BJ (cell line): ENCODE measurements at regions of chr20 and their contacts with region 1.

Region 1: DNA sequence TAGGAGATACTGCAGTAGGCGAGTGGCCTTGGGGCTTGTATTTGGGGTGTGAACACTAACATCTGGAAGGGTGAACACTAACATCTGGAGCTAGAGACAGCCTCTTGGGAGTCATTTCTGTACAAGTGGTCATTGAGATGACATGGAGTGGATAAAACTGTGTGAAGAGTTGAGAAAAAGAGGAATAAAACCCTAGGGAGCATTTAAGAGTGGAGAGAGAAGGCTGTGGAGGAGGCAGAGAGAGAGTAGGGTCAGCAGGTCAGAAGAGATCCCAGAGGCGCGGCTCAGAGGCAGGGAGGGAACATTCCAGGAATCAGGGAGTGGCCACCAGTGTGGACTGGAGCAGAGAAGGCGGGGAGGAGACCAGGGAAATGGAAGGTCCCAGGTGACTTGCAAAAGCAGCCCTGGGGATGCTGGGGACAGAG is 202.0 kb upstream of the RNF24 start:
- DNase-seq: no peak
- H3K4me3 ChIP-seq: no peak overlapping the region
- H3K27me3 ChIP-seq: no peaks in the 10 kb centered on the region
- CTCF ChIP-seq: no peak

Region 2: GRCh38 chr20:4064144-4064909 is 153.0 kb before region 1 on chr20:
- CTCF ChIA-PET with region 1: no interaction called
- POLR2A ChIA-PET with region 1: no interaction called
- DNase-seq: peak; percentile 78
- H3K4me3 ChIP-seq: no peak overlapping the region
- H3K27me3 ChIP-seq: no peaks in the 10 kb centered on the region
- CTCF ChIP-seq: 0 out of 2 replicates have a peak, but pooled peaks have one; percentile 2

Region 3: GRCh38 chr20:4112481-4113421 is 104.6 kb before region 1 on chr20:
- CTCF ChIA-PET with region 1: interaction called, 3 read pairs
- POLR2A ChIA-PET with region 1: interaction called, 15 read pairs
- DNase-seq: no peak
- H3K4me3 ChIP-seq: no peak overlapping the region
- H3K27me3 ChIP-seq: no peaks in the 10 kb centered on the region
- CTCF ChIP-seq: no peak

Region 4: DNA sequence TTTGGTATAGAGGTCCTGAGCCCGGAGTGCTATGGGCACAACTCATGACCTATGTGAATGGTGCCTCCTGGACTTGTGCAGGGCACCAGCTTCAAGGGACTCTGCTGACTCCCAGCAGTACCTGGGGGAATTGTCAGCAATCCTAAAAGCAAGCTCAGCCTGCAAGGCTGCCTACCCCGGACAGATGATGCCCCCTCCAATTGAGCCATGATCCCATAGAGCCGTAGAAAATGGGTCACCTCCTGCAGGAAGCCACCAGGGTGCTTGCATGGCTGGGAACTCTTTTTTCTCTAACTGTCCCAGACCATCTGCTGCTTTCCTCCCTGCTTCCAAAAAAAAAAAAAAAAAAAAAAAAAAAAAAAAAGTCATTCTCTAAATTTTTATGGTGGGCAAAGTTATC is 491.5 kb after region 1 on chr20:
- CTCF ChIA-PET with region 1: no interaction called
- POLR2A ChIA-PET with region 1: interaction called, 12 read pairs
- DNase-seq: no peak
- H3K4me3 ChIP-seq: no peak overlapping the region
- H3K27me3 ChIP-seq: no peaks in the 10 kb centered on the region; the same call in none of the 2 replicates
- CTCF ChIP-seq: no peak